Panc1 (cell line): ENCODE measurements at regions of chr2 and their contacts with region 1.

Region 1: GRCh38 chr2:42663106-42663780 is 94.8 kb downstream of the MTA3 start:
- DNase-seq: peak; percentile 73
- ATAC-seq: peak; percentile 96
- H3K4me3 ChIP-seq: no peak overlapping the region
- H3K27ac ChIP-seq: no peak overlapping the region
- H3K4me1 ChIP-seq: no peaks in the 10 kb centered on the region
- H3K27me3 ChIP-seq: no peaks in the 10 kb centered on the region
- CTCF ChIP-seq: peak; percentile 99

Region 2: GRCh38 chr2:42386684-42387083 is 276.6 kb before region 1 on chr2:
- CTCF ChIA-PET with region 1: no interaction called
- POLR2A ChIA-PET with region 1: no interaction called
- in situ Hi-C with region 1: no loop called
- intact Hi-C with region 1: loop called (anchors 10 kb)
- DNase-seq: no peak
- ATAC-seq: peak; percentile 51; the same call in 1 of the 2 replicates
- H3K4me3 ChIP-seq: no peak overlapping the region
- H3K27ac ChIP-seq: no peak overlapping the region
- H3K4me1 ChIP-seq: no peaks in the 10 kb centered on the region
- H3K27me3 ChIP-seq: no peaks in the 10 kb centered on the region
- CTCF ChIP-seq: peak; percentile 63

Region 3: GRCh38 chr2:42474765-42475454 is 188.3 kb before region 1 on chr2:
- CTCF ChIA-PET with region 1: interaction called, 14 read pairs
- POLR2A ChIA-PET with region 1: no interaction called
- in situ Hi-C with region 1: no loop called
- intact Hi-C with region 1: no loop called
- DNase-seq: no peak
- ATAC-seq: no peak
- H3K4me3 ChIP-seq: no peak overlapping the region
- H3K27ac ChIP-seq: no peak overlapping the region
- H3K4me1 ChIP-seq: no peaks in the 10 kb centered on the region
- H3K27me3 ChIP-seq: no peaks in the 10 kb centered on the region
- CTCF ChIP-seq: no peak

Region 4: DNA sequence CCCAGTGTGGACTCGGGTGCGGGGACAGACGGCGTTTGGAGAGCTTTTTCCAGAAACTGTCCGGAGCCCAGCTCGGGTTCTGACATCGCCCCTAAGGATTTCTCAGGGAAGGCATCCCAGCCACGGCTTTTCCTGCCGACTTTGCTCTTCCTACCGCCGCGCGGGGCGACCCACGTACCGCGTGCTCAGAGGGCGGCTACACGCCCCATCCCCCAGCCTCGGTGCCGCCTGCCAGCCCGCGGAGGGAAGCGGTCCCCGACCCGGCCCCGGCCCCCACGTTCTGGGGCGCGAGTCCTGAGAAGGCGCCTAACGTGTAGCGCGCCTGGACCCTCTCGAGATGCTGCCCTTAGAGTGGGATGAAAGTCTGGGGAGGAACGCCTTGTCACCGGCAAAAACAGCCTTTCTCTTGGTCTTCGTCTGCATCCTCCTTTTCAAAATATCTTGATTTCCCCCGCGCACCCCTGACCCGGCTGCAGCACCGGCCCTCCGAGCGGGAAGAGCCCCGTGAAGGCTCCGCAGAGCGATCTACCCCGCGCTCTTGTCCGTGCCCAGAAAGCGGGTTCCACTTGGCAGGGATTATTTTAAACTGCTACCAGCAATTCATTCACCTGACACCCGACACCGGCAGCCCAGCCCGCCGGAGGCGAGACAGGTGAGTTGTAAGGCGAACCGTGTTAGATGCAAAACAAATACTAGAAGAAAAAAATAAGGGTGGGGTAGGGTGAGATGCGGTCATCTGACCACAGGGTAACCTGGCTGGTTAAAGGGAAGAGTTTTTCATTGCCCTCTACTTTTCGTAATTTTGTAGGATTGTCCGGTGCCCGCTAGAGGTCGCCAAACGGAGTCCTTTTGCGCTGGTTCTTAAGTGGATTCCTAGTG is 168.6 kb before region 1 on chr2:
- CTCF ChIA-PET with region 1: interaction called, 3 read pairs
- POLR2A ChIA-PET with region 1: interaction called, 8 read pairs
- in situ Hi-C with region 1: no loop called
- intact Hi-C with region 1: loop called (anchors 2 kb)
- DNase-seq: peak; percentile 83
- ATAC-seq: peak; percentile 73
- H3K4me3 ChIP-seq: peak overlapping the region; percentile 93 to 94
- H3K27ac ChIP-seq: peak overlapping the region; percentile 83
- H3K4me1 ChIP-seq: peaks cover 24% of the 10 kb centered on the region
- H3K27me3 ChIP-seq: no peaks in the 10 kb centered on the region
- CTCF ChIP-seq: peak; percentile 94

Region 5: DNA sequence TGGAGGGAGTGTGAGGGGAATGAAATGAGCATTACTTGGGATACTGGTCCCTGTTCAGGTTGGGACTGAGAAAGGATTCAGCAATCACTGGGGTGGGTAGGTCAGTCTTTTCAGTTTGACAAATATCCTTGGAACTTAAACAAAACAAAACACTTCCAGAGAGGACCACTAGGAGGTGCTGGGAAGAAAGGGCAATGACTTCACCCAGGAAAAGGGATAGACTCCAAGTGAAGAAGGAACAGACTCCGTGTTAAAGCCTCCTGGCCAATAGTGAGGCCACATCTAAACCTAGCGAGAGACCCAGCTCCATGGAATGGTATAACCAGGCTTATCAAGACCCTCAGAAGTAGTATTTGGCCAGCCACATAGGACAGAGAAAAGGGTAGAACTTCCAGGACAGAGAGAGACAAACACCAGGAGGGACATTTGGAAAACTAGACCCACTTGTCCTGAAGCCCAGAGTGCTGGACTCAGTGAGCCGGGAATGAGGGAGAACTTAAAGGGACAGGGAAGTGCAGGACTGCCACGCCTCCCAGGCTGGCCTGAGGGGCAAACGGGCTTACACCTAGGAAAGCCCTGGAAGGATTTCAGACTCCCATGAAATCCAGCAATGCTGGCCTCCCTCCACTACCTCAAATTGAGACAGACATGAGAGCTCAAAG is 149.9 kb before region 1 on chr2:
- CTCF ChIA-PET with region 1: interaction called, 3 read pairs
- POLR2A ChIA-PET with region 1: interaction called, 4 read pairs
- in situ Hi-C with region 1: no loop called
- intact Hi-C with region 1: loop called (anchors 5 kb)
- DNase-seq: no peak
- ATAC-seq: peak; percentile 68; the same call in 1 of the 2 replicates
- H3K4me3 ChIP-seq: no peak overlapping the region
- H3K27ac ChIP-seq: no peak overlapping the region
- H3K4me1 ChIP-seq: no peaks in the 10 kb centered on the region
- H3K27me3 ChIP-seq: no peaks in the 10 kb centered on the region
- CTCF ChIP-seq: peak; percentile 83

Region 6: GRCh38 chr2:42618972-42619371 is 44.3 kb before region 1 on chr2:
- CTCF ChIA-PET with region 1: no interaction called
- POLR2A ChIA-PET with region 1: no interaction called
- in situ Hi-C with region 1: no loop called
- intact Hi-C with region 1: no loop called
- DNase-seq: no peak
- ATAC-seq: no peak
- H3K4me3 ChIP-seq: no peak overlapping the region
- H3K27ac ChIP-seq: no peak overlapping the region
- H3K4me1 ChIP-seq: 0 out of 2 replicates have a peak, but pooled peaks cover 5% of the 10 kb centered on the region
- H3K27me3 ChIP-seq: no peaks in the 10 kb centered on the region
- CTCF ChIP-seq: no peak

Region 7: DNA sequence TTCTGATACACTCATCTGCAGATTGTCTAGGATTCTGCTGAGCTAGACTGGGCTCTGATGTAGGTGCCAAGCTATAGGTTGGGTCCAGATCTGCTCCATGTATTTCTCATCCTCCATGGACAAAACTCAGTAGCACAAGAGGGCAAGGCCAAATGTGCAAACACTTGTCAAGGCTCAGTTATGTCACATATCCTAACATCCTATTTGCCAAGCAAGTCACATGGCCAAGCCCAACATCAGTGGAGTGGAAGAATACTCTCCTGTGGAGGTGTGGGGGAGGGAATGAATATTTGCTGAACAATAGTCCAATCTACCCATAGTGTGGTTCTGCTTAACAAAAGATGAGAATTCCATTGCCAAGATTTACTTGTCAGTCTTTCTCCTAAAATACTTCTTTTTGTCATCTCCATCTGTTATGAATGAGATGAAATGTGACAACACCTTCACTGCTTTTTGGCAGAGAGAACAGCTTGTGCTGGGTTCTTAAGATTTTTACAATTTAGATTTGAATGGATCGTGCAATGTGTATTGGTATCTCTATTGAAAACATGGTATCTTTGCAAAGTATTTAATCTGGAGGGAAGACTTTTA is 10.8 kb after region 1 on chr2:
- CTCF ChIA-PET with region 1: interaction called, 16 read pairs
- POLR2A ChIA-PET with region 1: no interaction called
- in situ Hi-C with region 1: no loop called
- intact Hi-C with region 1: no loop called
- DNase-seq: no peak
- ATAC-seq: no peak
- H3K4me3 ChIP-seq: no peak overlapping the region
- H3K27ac ChIP-seq: no peak overlapping the region
- H3K4me1 ChIP-seq: no peaks in the 10 kb centered on the region
- H3K27me3 ChIP-seq: no peaks in the 10 kb centered on the region
- CTCF ChIP-seq: no peak